GM18951 (cell line): ENCODE measurements at regions of chr3 and their contacts with region 1.

Region 1: GRCh38 chr3:39990532-39990931 is 181.1 kb downstream of the MYRIP start:
- POLR2A ChIP-seq: no peak

Region 2: GRCh38 chr3:39718674-39719595 is 271.6 kb before region 1 on chr3:
- in situ Hi-C with region 1: loop called (anchors 10 kb)
- POLR2A ChIP-seq: no peak

Region 3: GRCh38 chr3:40631351-40631995 is 640.9 kb after region 1 on chr3:
- in situ Hi-C with region 1: no loop called
- POLR2A ChIP-seq: no peak